Upper lobe of right lung (tissue), 1 donor: ENCODE measurements at regions of chr1 and their contacts with region 1.

Region 1: GRCh38 chr1:214123061-214123784 is 135.4 kb downstream of the PROX1 start:
- DNase-seq: no peak
- ATAC-seq: peak; percentile 78
- H3K4me3 ChIP-seq: no peak overlapping the region
- H3K27ac ChIP-seq: no peak overlapping the region
- H3K4me1 ChIP-seq: peaks cover 5% of the 10 kb centered on the region
- H3K27me3 ChIP-seq: no peaks in the 10 kb centered on the region
- CTCF ChIP-seq: peak; percentile 49

Region 2: GRCh38 chr1:213374369-213374768 is 748.9 kb before region 1 on chr1:
- intact Hi-C with region 1: loop called (anchors 10 kb)
- DNase-seq: peak; percentile 74
- ATAC-seq: peak; percentile 78
- H3K4me3 ChIP-seq: no peak overlapping the region
- H3K27ac ChIP-seq: no peak overlapping the region
- H3K4me1 ChIP-seq: no peaks in the 10 kb centered on the region
- H3K27me3 ChIP-seq: no peaks in the 10 kb centered on the region
- CTCF ChIP-seq: peak; percentile 88

Region 3: DNA sequence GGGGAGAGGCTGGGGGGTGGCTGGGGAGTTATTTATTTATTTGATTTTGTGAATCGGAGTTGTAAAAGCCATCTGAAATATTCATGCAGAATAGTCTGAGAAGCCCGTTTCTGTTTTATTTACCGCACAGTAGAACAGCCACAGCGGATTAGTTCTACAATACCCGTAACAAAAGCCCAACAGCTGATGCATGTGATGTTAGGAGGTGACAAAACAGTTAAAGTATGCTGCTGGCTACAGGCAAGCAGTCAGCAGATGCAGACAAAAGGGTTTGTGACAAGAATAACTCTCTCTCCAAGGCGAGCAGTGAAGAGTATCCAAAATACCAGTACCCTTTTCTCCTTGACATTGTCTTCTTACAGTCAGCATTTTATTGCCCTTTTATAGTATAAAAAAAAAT is 93.4 kb before region 1 on chr1:
- intact Hi-C with region 1: no loop called
- DNase-seq: no peak
- ATAC-seq: no peak
- H3K4me3 ChIP-seq: no peak overlapping the region
- H3K27ac ChIP-seq: no peak overlapping the region
- H3K4me1 ChIP-seq: no peaks in the 10 kb centered on the region
- H3K27me3 ChIP-seq: peaks cover 4% of the 10 kb centered on the region
- CTCF ChIP-seq: no peak

Region 4: GRCh38 chr1:214248311-214249085 is 125.3 kb after region 1 on chr1:
- intact Hi-C with region 1: no loop called
- DNase-seq: no peak
- ATAC-seq: no peak
- H3K4me3 ChIP-seq: no peak overlapping the region
- H3K27ac ChIP-seq: no peak overlapping the region
- H3K4me1 ChIP-seq: no peaks in the 10 kb centered on the region
- H3K27me3 ChIP-seq: peaks cover 3% of the 10 kb centered on the region
- CTCF ChIP-seq: no peak